Endothelial cell of umbilical vein (primary cell): ENCODE measurements at regions of chr15 and their contacts with region 1.

Region 1: DNA sequence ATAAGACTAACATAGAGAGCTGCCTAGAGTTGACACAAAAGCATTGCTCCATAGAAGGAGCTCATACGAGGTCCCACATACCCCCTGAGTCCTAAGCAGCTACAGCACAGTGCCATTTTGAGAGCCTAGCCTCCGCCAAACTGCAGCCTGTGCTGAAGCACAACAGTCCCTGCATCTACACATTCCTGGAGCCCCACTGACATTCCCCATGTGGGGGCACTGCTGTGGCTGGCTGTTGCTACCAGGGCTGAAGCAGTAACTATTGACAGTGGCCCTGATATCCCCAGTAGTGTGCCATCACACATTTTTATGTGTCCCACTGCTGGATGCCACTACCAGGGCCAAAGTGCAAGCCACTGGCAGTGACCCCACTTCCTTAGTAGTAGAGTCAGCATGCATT is 80.3 kb downstream of the CERS3 start:
- DNase-seq: no peak
- H3K4me3 ChIP-seq: no peak overlapping the region
- H3K27ac ChIP-seq: no peak overlapping the region
- H3K4me1 ChIP-seq: no peaks in the 10 kb centered on the region
- H3K27me3 ChIP-seq: no peaks in the 10 kb centered on the region
- CTCF ChIP-seq: no peak
- POLR2A ChIP-seq: no peak

Region 2: GRCh38 chr15:100468285-100468684 is 19.8 kb after region 1 on chr15:
- CTCF ChIA-PET with region 1: no interaction called
- POLR2A ChIA-PET with region 1: no interaction called
- dilution Hi-C with region 1: no loop called
- intact Hi-C with region 1: no loop called
- DNase-seq: no peak
- H3K4me3 ChIP-seq: no peak overlapping the region
- H3K27ac ChIP-seq: no peak overlapping the region
- H3K4me1 ChIP-seq: no peaks in the 10 kb centered on the region
- H3K27me3 ChIP-seq: no peaks in the 10 kb centered on the region
- CTCF ChIP-seq: no peak
- POLR2A ChIP-seq: no peak

Region 3: GRCh38 chr15:100500226-100500990 is 51.9 kb after region 1 on chr15:
- CTCF ChIA-PET with region 1: no interaction called
- POLR2A ChIA-PET with region 1: no interaction called
- dilution Hi-C with region 1: no loop called
- intact Hi-C with region 1: no loop called
- DNase-seq: no peak
- H3K4me3 ChIP-seq: no peak overlapping the region
- H3K27ac ChIP-seq: no peak overlapping the region
- H3K4me1 ChIP-seq: no peaks in the 10 kb centered on the region
- H3K27me3 ChIP-seq: no peaks in the 10 kb centered on the region
- CTCF ChIP-seq: no peak
- POLR2A ChIP-seq: no peak

Region 4: GRCh38 chr15:100612539-100612938 is 164.0 kb after region 1 on chr15:
- CTCF ChIA-PET with region 1: no interaction called
- POLR2A ChIA-PET with region 1: no interaction called
- dilution Hi-C with region 1: no loop called
- intact Hi-C with region 1: no loop called
- DNase-seq: no peak
- H3K4me3 ChIP-seq: no peak overlapping the region
- H3K27ac ChIP-seq: no peak overlapping the region
- H3K4me1 ChIP-seq: no peaks in the 10 kb centered on the region
- H3K27me3 ChIP-seq: no peaks in the 10 kb centered on the region
- CTCF ChIP-seq: no peak
- POLR2A ChIP-seq: no peak

Region 5: DNA sequence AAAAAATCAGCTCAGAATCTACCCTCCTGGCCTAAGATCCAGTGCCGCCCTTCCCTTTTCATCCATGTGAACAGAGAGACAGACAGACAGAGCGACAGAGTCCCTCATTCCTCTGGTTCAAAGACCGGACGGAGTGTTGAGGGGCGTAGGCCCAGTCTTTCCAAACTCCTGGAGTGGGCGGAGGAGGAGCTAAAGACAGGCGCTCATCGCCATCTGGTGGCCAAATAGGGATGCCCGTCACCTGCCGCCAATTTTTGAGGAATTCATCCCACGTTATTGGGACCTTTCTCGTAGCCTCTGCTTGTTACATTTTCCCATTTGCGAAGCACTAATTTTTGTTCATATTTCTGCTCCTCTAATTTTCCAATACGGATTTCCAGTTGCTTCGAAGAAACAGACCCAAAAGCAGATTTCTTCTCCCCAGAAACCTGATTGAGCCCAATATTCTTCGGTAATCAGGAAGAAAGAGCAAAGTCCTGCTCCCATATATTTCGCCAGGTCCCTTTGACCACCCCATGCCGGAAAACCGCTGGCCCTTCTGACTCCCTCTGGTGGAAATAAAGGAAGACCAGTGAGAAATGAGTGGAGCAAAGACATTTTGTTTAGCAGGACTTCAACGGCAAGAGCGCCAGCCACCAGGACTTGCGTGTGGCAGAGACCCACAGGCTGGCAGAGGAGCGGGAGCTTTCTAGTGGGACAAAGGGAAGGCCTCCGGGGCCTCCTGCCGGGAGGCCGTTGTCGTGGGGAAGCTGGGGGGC is 558.6 kb after region 1 on chr15:
- CTCF ChIA-PET with region 1: no interaction called
- POLR2A ChIA-PET with region 1: no interaction called
- dilution Hi-C with region 1: no loop called
- intact Hi-C with region 1: no loop called
- DNase-seq: peak; percentile 75
- H3K4me3 ChIP-seq: no peak overlapping the region
- H3K27ac ChIP-seq: no peak overlapping the region
- H3K4me1 ChIP-seq: peaks cover 6% of the 10 kb centered on the region
- H3K27me3 ChIP-seq: no peaks in the 10 kb centered on the region
- CTCF ChIP-seq: peak; percentile 85 to 91
- POLR2A ChIP-seq: no peak

Region 6: DNA sequence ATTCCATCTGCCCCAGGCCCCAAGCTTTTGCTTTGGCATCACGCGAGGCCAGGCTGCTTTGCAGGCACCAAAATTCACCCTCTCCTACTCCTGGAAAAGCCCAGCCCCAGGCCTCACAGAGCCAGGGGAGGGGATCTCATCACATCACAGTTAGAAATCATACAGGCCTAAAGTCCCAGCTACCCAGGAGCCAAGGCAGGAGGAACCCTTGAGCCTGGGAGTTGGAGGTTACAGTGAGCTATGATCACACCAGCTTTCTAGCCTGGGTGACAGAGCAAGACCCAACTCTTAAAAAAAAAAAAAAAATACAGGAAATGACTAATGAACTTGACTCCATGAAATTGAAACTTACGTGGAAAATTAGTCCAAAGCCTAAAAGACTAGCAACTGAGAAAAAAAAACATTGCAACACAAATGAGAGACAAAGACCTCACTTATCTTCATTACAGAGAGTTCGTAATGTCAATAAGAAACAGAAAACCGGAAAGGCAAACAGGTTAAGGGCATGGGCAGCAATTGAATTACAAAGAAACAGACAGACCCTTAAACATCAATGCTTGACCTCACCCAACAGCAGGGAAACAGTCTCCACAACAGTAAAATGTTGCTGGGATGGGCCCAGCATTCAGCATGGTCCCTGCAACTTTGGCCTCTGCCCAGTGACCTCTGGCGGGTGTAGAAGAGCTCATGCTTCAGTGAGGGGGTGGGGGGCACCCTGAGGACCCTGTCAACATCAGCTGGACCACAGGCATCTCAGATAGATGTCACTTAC is 622.2 kb after region 1 on chr15:
- CTCF ChIA-PET with region 1: no interaction called
- POLR2A ChIA-PET with region 1: no interaction called
- dilution Hi-C with region 1: no loop called
- intact Hi-C with region 1: loop called (anchors 10 kb)
- DNase-seq: peak; percentile 87
- H3K4me3 ChIP-seq: no peak overlapping the region
- H3K27ac ChIP-seq: peak overlapping the region; percentile 71
- H3K4me1 ChIP-seq: peaks cover 10% of the 10 kb centered on the region
- H3K27me3 ChIP-seq: no peaks in the 10 kb centered on the region
- CTCF ChIP-seq: no peak
- POLR2A ChIP-seq: no peak